Naive thymus-derived CD4-positive, alpha-beta T cell (primary cell): ENCODE measurements at regions of chr1 and their contacts with region 1.

Region 1: GRCh38 chr1:113140588-113141446 is 67.8 kb downstream of the LRIG2 start:
- DNase-seq: peak in 8 of 9 donors; percentile 8 to 62 (median 47)
- ATAC-seq: peak; percentile 87
- H3K4me3 ChIP-seq: no peak overlapping the region
- H3K4me3 Mint-ChIP-seq: peak overlapping the region in 2 of 10 donors; percentile 21 to 59
- H3K27ac ChIP-seq: no peak overlapping the region
- H3K27ac Mint-ChIP-seq: peak overlapping the region in 4 of 9 donors; percentile 21 to 49 (median 46)
- H3K4me1 ChIP-seq: peaks cover 0 to 8% of the 10 kb centered on the region in 2 donors
- H3K4me1 Mint-ChIP-seq: peaks cover 8 to 25% (median 19%) of the 10 kb centered on the region in 7 donors
- H3K27me3 ChIP-seq: no peaks in the 10 kb centered on the region
- H3K27me3 Mint-ChIP-seq: no peaks in the 10 kb centered on the region

Region 2: GRCh38 chr1:113191579-113192076 is 50.8 kb after region 1 on chr1:
- CTCF ChIA-PET with region 1: no interaction called
- POLR2A ChIA-PET with region 1: no interaction called
- intact Hi-C with region 1: no loop called
- DNase-seq: no peak
- ATAC-seq: no peak
- H3K4me3 ChIP-seq: no peak overlapping the region
- H3K4me3 Mint-ChIP-seq: no peak overlapping the region
- H3K27ac ChIP-seq: no peak overlapping the region
- H3K27ac Mint-ChIP-seq: no peak overlapping the region
- H3K4me1 ChIP-seq: no peaks in the 10 kb centered on the region
- H3K4me1 Mint-ChIP-seq: peaks cover 0 to 8% (median 0%) of the 10 kb centered on the region in 7 donors
- H3K27me3 ChIP-seq: no peaks in the 10 kb centered on the region
- H3K27me3 Mint-ChIP-seq: peaks cover 5 to 31% (median 16%) of the 10 kb centered on the region in 5 donors

Region 3: GRCh38 chr1:113677250-113678158 is 536.7 kb after region 1 on chr1:
- CTCF ChIA-PET with region 1: interaction called, 6 read pairs
- POLR2A ChIA-PET with region 1: no interaction called
- intact Hi-C with region 1: loop called (anchors 1 kb)
- DNase-seq: peak in 5 of 9 donors; percentile 23 to 49 (median 39)
- ATAC-seq: peak; percentile 60
- H3K4me3 ChIP-seq: no peak overlapping the region
- H3K4me3 Mint-ChIP-seq: no peak overlapping the region
- H3K27ac ChIP-seq: no peak overlapping the region
- H3K27ac Mint-ChIP-seq: no peak overlapping the region
- H3K4me1 ChIP-seq: no peaks in the 10 kb centered on the region
- H3K4me1 Mint-ChIP-seq: peaks cover 0 to 10% (median 0%) of the 10 kb centered on the region in 7 donors
- H3K27me3 ChIP-seq: no peaks in the 10 kb centered on the region
- H3K27me3 Mint-ChIP-seq: no peaks in the 10 kb centered on the region

Region 4: DNA sequence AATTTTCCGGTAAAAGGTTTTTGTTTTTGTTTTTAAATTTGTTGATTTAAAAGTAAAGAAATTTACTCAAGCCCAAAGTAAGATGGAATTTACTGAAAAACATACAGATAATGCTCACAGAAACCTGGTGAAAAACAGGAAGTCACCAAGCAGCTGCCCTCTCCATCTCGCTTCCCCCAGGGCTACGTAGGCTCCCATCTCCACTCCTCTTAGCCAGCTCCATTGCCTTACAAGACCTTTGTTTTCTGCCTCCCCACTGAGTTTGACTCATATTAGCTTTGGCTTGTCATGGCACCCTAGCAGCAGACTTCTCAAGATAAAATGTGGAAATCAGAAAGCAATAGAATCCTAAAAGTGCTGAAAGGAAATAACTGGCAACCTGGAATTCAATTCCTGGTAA is 560.6 kb after region 1 on chr1:
- CTCF ChIA-PET with region 1: no interaction called
- POLR2A ChIA-PET with region 1: no interaction called
- intact Hi-C with region 1: no loop called
- DNase-seq: peak in 1 of 9 donors; percentile 2
- ATAC-seq: no peak
- H3K4me3 ChIP-seq: no peak overlapping the region
- H3K4me3 Mint-ChIP-seq: peak overlapping the region in 6 of 10 donors; percentile 10 to 58 (median 32)
- H3K27ac ChIP-seq: no peak overlapping the region
- H3K27ac Mint-ChIP-seq: peak overlapping the region in 2 of 9 donors; percentile 4 to 69
- H3K4me1 ChIP-seq: no peaks in the 10 kb centered on the region
- H3K4me1 Mint-ChIP-seq: peaks cover 7 to 20% (median 17%) of the 10 kb centered on the region in 7 donors
- H3K27me3 ChIP-seq: no peaks in the 10 kb centered on the region
- H3K27me3 Mint-ChIP-seq: no peaks in the 10 kb centered on the region

Region 5: GRCh38 chr1:113978863-113979702 is 838.3 kb after region 1 on chr1 and contains the start of gene OLFML3:
- CTCF ChIA-PET with region 1: no interaction called
- POLR2A ChIA-PET with region 1: no interaction called
- intact Hi-C with region 1: loop called in 1 of 2 experiments (anchors 2 kb)
- DNase-seq: peak in 5 of 9 donors; percentile 11 to 28 (median 17)
- ATAC-seq: peak; percentile 60
- H3K4me3 ChIP-seq: no peak within 1 kb of the TSS
- H3K4me3 Mint-ChIP-seq: no peak within 1 kb of the TSS
- H3K27ac ChIP-seq: no peak within 1 kb of the TSS
- H3K27ac Mint-ChIP-seq: peak within 1 kb of the TSS in 7 of 9 donors; percentile 31 to 48 (median 40)
- H3K4me1 ChIP-seq: peaks cover 0 to 11% of the 10 kb centered on the region in 2 donors
- H3K4me1 Mint-ChIP-seq: peaks cover 24 to 49% (median 35%) of the 10 kb centered on the region in 7 donors
- H3K27me3 ChIP-seq: no peaks in the 10 kb centered on the region
- H3K27me3 Mint-ChIP-seq: no peaks in the 10 kb centered on the region
- total RNA-seq, gene OLFML3: 0.24 to 1.8 (median 1.1) TPM

Region 6: DNA sequence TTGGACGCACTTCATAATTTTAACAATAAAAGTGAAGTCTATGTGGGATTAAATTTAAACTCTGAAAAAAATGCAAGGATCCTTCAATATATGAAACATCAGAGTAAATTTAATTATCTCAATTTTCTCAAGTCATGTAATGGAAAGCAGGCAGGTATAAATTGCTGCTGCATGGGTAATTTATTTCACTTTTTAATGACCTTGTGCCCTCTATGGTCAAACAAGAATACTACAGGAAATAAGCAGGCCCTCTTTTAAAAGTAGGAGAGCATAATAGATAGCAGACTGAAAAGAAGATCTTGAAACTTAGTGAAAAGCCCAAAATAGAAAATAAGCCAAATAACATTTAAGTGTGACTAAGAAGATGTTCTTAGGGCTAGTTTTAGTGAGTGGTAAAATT is 1417.7 kb after region 1 on chr1:
- CTCF ChIA-PET with region 1: interaction called, 4 read pairs
- POLR2A ChIA-PET with region 1: no interaction called
- intact Hi-C with region 1: loop called in 1 of 2 experiments (anchors 5 kb)
- DNase-seq: peak in 4 of 9 donors; percentile 16 to 39 (median 25)
- ATAC-seq: no peak
- H3K4me3 ChIP-seq: no peak overlapping the region
- H3K4me3 Mint-ChIP-seq: no peak overlapping the region
- H3K27ac ChIP-seq: no peak overlapping the region
- H3K27ac Mint-ChIP-seq: no peak overlapping the region
- H3K4me1 ChIP-seq: no peaks in the 10 kb centered on the region
- H3K4me1 Mint-ChIP-seq: peaks cover 0 to 3% (median 0%) of the 10 kb centered on the region in 7 donors
- H3K27me3 ChIP-seq: no peaks in the 10 kb centered on the region
- H3K27me3 Mint-ChIP-seq: no peaks in the 10 kb centered on the region